ENCODE measurements at regions of chr3 and their contacts with region 1.

Region 1: DNA sequence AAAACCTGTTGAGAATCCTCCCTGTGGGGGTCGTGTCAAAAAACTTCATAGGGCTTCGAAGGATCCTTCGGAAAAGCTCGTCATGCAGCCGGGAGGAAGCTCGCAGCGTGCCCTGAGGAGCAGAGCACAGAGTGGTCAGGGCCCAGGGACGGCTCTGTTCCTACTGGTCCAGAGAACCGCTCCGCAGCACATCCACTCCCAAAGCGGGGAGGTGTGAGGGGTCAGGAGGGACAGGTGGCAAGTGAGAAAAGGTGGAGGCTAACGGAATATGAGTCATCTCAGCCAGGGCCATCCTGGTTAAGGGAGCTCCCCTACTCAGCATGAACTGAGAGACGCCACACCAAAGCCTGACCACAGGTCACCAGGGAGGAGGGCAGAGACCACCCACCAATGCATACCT is 66.2 kb downstream of the ABCC5 start:
- DNase-seq: no peak
- ATAC-seq: no peak
- H3K4me3 ChIP-seq: no peak overlapping the region
- H3K27ac ChIP-seq: no peak overlapping the region
- H3K4me1 ChIP-seq: no peaks in the 10 kb centered on the region
- H3K27me3 ChIP-seq: no peaks in the 10 kb centered on the region
- CTCF ChIP-seq: no peak

Region 2: GRCh38 chr3:183369117-183369516 is 582.3 kb before region 1 on chr3:
- CTCF ChIA-PET with region 1: no interaction called
- POLR2A ChIA-PET with region 1: no interaction called
- intact Hi-C with region 1: no loop called
- DNase-seq: no peak
- ATAC-seq: no peak
- H3K4me3 ChIP-seq: no peak overlapping the region
- H3K27ac ChIP-seq: peak overlapping the region; percentile 96
- H3K4me1 ChIP-seq: peaks cover 43% of the 10 kb centered on the region
- H3K27me3 ChIP-seq: no peaks in the 10 kb centered on the region
- CTCF ChIP-seq: no peak

Region 3: GRCh38 chr3:184129012-184129411 is 177.6 kb after region 1 on chr3:
- CTCF ChIA-PET with region 1: no interaction called
- POLR2A ChIA-PET with region 1: interaction called, 16 read pairs
- intact Hi-C with region 1: no loop called
- DNase-seq: peak; percentile 55
- ATAC-seq: peak; percentile 77
- H3K4me3 ChIP-seq: no peak overlapping the region
- H3K27ac ChIP-seq: no peak overlapping the region
- H3K4me1 ChIP-seq: peaks cover 17% of the 10 kb centered on the region
- H3K27me3 ChIP-seq: no peaks in the 10 kb centered on the region
- CTCF ChIP-seq: peak; percentile 71